Caco-2 (cell line): ENCODE measurements at regions of chr9 and their contacts with region 1.

Region 1: GRCh38 chr9:706606-707459 is 134.7 kb upstream of the DMRT1 start:
- DNase-seq: peak; percentile 62 to 63
- H3K4me3 ChIP-seq: peak overlapping the region; percentile 57
- H3K4me3 Mint-ChIP-seq: peak overlapping the region; percentile 97
- H3K27ac Mint-ChIP-seq: peak overlapping the region; percentile 95
- H3K4me1 ChIP-seq: peaks cover 32% of the 10 kb centered on the region
- H3K4me1 Mint-ChIP-seq: peaks cover 23% of the 10 kb centered on the region
- H3K27me3 ChIP-seq: no peaks in the 10 kb centered on the region
- H3K27me3 Mint-ChIP-seq: no peaks in the 10 kb centered on the region
- CTCF ChIP-seq: no peak

Region 2: DNA sequence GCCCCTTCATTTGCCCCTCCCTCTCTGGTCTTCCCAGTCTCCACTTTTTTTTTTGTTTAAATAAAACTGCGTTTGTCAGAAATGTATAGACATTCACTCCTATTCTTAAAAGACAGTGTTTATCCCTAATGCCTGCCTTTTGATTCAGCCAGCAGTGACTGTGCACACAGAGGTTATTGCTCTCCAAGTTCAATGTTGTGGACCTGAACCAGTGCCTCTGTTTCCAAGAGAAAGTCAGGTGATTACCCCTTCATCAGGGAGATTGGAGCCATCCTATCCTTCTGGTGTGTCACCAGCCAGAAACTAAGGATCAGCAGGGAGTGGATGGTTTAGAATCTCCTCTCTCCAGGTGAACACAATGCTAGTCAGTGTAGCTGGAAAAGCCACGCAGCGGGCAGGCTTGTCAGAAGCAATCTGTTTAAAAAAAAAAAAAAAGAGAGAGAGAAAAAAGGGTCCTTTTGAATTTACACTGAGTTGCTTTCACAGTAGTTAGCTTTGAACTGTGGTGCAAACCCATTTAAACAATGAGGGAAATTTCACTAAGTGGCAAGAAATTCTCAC is 32.8 kb before region 1 on chr9:
- CTCF ChIA-PET with region 1: no interaction called
- POLR2A ChIA-PET with region 1: no interaction called
- intact Hi-C with region 1: loop called (anchors 5 kb)
- DNase-seq: peak in 1 of 2 experiments; percentile 5
- H3K4me3 ChIP-seq: no peak overlapping the region
- H3K4me3 Mint-ChIP-seq: no peak overlapping the region
- H3K27ac Mint-ChIP-seq: no peak overlapping the region
- H3K4me1 ChIP-seq: peaks cover 64% of the 10 kb centered on the region
- H3K4me1 Mint-ChIP-seq: peaks cover 27% of the 10 kb centered on the region
- H3K27me3 ChIP-seq: no peaks in the 10 kb centered on the region
- H3K27me3 Mint-ChIP-seq: no peaks in the 10 kb centered on the region
- CTCF ChIP-seq: no peak